K562 (cell line): ENCODE measurements at regions of chr1 and their contacts with region 1.

Region 1: GRCh38 chr1:48246727-48247126 is 24.2 kb downstream of the SLC5A9 start:
- DNase-seq: no peak
- ATAC-seq: no peak
- H3K4me3 ChIP-seq: no peak overlapping the region
- H3K27ac ChIP-seq: no peak overlapping the region
- H3K4me1 ChIP-seq: no peaks in the 10 kb centered on the region
- H3K27me3 ChIP-seq: no peaks in the 10 kb centered on the region
- CTCF ChIP-seq: no peak
- EP300 ChIP-seq: no peak
- POLR2A ChIP-seq: no peak
- RAD21 ChIP-seq: no peak

Region 2: DNA sequence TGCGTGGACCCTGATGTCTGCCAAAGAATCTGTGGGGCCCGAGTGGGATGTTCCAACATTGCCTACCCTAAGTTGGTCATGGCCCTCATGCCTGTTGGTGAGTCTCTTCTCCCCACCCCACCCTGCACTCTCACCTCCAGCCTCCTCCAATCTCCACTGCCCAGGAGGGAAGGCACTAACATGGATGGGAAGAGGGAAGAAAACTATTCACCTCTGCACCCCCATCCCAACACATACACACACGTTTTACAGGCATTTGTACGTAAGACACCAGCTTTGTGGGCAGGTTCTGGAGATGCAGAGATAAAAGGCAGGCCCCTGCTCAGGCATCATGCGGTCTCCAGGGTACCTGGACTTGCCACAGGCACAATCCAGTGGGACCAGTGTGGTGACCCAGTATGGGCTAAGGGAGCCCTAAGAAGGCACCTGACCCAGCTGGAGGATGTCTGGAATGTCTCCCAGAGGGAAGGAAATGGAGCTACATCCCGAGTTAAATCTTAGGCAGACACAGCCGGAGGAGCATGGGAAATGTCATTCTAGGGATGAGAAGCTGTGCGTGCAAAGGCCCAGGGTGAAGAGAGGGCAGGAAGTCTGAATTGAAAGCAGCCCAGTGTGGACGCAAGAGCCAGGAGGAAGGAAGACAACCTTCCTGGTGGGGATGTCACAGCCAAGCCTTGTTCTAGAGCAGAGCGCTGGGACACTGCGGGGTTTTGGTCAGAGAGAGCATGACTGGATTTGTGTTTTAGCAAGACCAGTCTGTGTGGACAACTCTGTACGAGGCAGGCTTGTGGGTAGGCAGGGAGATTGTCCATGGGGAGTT is 12.9 kb before region 1 on chr1:
- CTCF ChIA-PET with region 1: no interaction called
- POLR2A ChIA-PET with region 1: no interaction called
- in situ Hi-C with region 1: no loop called
- intact Hi-C with region 1: no loop called
- DNase-seq: no peak
- ATAC-seq: no peak
- H3K4me3 ChIP-seq: no peak overlapping the region
- H3K27ac ChIP-seq: no peak overlapping the region
- H3K4me1 ChIP-seq: no peaks in the 10 kb centered on the region
- H3K27me3 ChIP-seq: no peaks in the 10 kb centered on the region
- CTCF ChIP-seq: no peak
- EP300 ChIP-seq: no peak
- POLR2A ChIP-seq: no peak
- RAD21 ChIP-seq: no peak

Region 3: GRCh38 chr1:48442864-48443624 is 196.3 kb after region 1 on chr1:
- CTCF ChIA-PET with region 1: no interaction called
- POLR2A ChIA-PET with region 1: no interaction called
- in situ Hi-C with region 1: no loop called
- intact Hi-C with region 1: no loop called
- DNase-seq: no peak
- ATAC-seq: no peak
- H3K4me3 ChIP-seq: no peak overlapping the region
- H3K27ac ChIP-seq: no peak overlapping the region
- H3K4me1 ChIP-seq: no peaks in the 10 kb centered on the region
- H3K27me3 ChIP-seq: no peaks in the 10 kb centered on the region
- CTCF ChIP-seq: no peak
- EP300 ChIP-seq: no peak
- POLR2A ChIP-seq: no peak
- RAD21 ChIP-seq: no peak

Region 4: GRCh38 chr1:48498096-48498791 is 251.5 kb after region 1 on chr1:
- CTCF ChIA-PET with region 1: no interaction called
- POLR2A ChIA-PET with region 1: no interaction called
- in situ Hi-C with region 1: no loop called
- intact Hi-C with region 1: loop called (anchors 5 kb)
- DNase-seq: peak; percentile 76 to 86 (median 83)
- ATAC-seq: peak; percentile 98
- H3K4me3 ChIP-seq: no peak overlapping the region
- H3K27ac ChIP-seq: no peak overlapping the region
- H3K4me1 ChIP-seq: no peaks in the 10 kb centered on the region
- H3K27me3 ChIP-seq: no peaks in the 10 kb centered on the region
- CTCF ChIP-seq: peak; percentile 81 to 90 (median 85)
- EP300 ChIP-seq: no peak
- POLR2A ChIP-seq: no peak
- RAD21 ChIP-seq: peak; percentile 46 to 56